ENCODE measurements at regions of chr10 and their contacts with region 1.

Region 1: GRCh38 chr10:102055647-102056419 is at the start of gene ARMH3:
- DNase-seq: peak; percentile 96 to 98 (median 97)
- H3K4me3 ChIP-seq: peak within 1 kb of the TSS; percentile 80 to 97 (median 94)
- H3K27ac ChIP-seq: peak within 1 kb of the TSS; percentile 74 to 89
- H3K4me1 ChIP-seq: peaks cover 0 to 27% (median 13%) of the 10 kb centered on the region in 4 experiments
- H3K27me3 ChIP-seq: no peaks in the 10 kb centered on the region

Region 2: DNA sequence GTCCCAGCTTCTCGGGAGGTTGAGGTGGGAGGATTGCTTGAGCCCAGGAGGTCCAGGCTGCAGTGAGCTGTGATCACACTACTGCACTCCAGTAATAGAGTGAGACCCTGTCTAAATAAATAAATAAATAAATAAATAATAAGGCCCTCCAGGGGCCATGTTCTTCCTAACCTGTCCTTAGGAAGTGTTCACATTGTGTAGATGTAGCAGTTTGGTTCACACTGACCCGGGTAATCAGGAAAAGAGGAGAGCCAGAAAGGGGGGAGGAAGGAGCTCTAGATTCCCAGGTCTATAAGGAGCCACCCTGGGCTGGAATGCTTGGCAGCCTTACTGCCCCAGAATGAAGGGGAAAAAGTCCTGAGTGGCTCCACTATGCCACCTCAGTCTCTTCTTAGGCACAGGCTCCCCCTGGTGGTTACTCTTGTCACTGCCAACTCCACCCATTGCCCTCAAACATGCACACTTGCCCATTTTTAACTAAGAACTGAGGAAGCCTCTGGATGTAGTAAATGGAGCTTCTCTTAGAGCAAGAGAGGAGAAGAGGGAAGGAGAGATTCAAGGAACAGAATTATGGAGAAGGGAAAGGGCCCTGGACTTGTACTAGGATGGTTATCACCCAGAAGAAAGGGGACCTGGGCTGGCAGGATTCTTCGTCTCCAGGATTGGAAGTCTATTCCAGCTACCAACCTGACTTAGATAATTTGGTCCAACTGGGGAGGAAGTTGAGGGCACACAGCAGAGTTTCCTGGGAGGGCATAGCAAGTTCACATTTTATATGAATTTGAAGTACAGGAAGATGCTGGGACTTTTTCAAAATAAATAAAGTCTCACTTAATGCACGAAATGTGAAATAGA is 17.1 kb after region 1 on chr10:
- CTCF ChIA-PET with region 1: interaction called, 17 read pairs
- POLR2A ChIA-PET with region 1: interaction called, 5 read pairs
- DNase-seq: peak; percentile 79 to 90 (median 83)
- H3K4me3 ChIP-seq: no peak overlapping the region
- H3K27ac ChIP-seq: no peak overlapping the region
- H3K4me1 ChIP-seq: peaks cover 3 to 15% (median 5%) of the 10 kb centered on the region in 4 experiments
- H3K27me3 ChIP-seq: no peaks in the 10 kb centered on the region

Region 3: GRCh38 chr10:102225646-102226541 is 170.1 kb after region 1 on chr10 and contains the start of gene ELOVL3:
- CTCF ChIA-PET with region 1: no interaction called
- POLR2A ChIA-PET with region 1: no interaction called
- DNase-seq: peak; percentile 90 to 96 (median 95)
- H3K4me3 ChIP-seq: peak within 1 kb of the TSS in 4 of 7 experiments; percentile 9 to 69 (median 36)
- H3K27ac ChIP-seq: no peak within 1 kb of the TSS
- H3K4me1 ChIP-seq: peaks cover 0 to 26% (median 25%) of the 10 kb centered on the region in 4 experiments
- H3K27me3 ChIP-seq: peaks cover 6 to 46% (median 26%) of the 10 kb centered on the region in 5 experiments